Heart left ventricle (tissue), 16 donors: ENCODE measurements at regions of chr17 and their contacts with region 1.

Region 1: GRCh38 chr17:37551788-37552187 is 57.4 kb downstream of the SYNRG start:
- DNase-seq: no peak
- ATAC-seq: no peak
- H3K4me3 ChIP-seq: no peak overlapping the region
- H3K27ac ChIP-seq: no peak overlapping the region
- H3K4me1 ChIP-seq: peaks cover 0 to 47% (median 33%) of the 10 kb centered on the region in 12 donors
- H3K27me3 ChIP-seq: no peaks in the 10 kb centered on the region
- CTCF ChIP-seq: no peak
- POLR2A ChIP-seq: no peak

Region 2: DNA sequence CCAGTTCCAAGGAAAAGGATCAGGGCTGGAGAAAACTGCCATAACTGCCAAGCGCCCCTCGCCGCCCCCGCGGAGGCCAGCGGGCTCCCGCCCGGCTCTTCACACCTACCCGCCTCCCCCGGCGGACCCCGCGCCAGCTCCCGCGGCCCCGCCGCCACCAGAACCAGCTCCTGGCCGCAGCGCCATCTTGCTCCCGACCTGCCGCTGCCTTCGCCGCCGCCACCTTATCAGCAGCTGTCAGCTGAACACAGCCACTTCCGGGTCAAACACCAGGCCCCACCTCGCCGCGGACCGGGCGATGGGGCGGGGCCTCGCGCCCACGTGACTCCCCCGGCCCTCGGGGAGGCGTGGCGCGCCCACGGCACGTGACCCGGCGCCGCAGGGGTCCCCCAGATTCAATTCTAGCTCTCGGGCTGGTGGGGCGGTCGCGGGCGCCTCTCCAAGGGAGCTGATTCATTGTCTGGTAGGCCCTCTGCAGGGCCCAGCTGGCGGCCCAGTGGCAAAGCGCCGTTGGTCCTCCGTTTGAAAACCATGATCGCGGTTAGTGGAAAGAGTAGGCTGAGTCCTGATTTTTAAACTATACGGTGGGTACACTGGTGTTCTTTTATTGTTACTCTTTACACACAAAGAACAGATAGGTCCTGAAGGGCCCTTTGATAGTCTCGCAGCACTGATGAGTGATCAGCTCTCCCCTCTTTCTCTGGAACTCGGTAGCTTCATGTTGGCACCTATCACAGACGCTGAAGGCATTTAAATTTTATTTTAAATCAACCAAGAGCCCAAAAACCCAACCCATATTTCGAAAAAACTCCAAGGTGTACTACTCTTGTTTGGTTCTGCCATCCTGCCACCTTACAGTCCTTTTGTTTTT is 57.6 kb after region 1 on chr17 and contains the start of gene SYNRG:
- intact Hi-C with region 1: loop called in 1 of 10 experiments (anchors 10 kb)
- DNase-seq: peak; percentile 95 to 97 (median 96)
- ATAC-seq: peak; percentile 96 to 99 (median 99)
- H3K4me3 ChIP-seq: peak within 1 kb of the TSS; percentile 72 to 99 (median 93)
- H3K27ac ChIP-seq: peak within 1 kb of the TSS; percentile 49 to 97 (median 94)
- H3K4me1 ChIP-seq: peaks cover 0 to 44% (median 28%) of the 10 kb centered on the region in 12 donors
- H3K27me3 ChIP-seq: no peaks in the 10 kb centered on the region
- CTCF ChIP-seq: peak in 9 of 12 donors; percentile 24 to 60 (median 48)
- POLR2A ChIP-seq: peak in 1 of 2 donors; percentile 90
- total RNA-seq, gene SYNRG: 20.0 to 52.4 (median 34.8) TPM